ENCODE measurements at regions of chr2 and their contacts with region 1.

Region 1: DNA sequence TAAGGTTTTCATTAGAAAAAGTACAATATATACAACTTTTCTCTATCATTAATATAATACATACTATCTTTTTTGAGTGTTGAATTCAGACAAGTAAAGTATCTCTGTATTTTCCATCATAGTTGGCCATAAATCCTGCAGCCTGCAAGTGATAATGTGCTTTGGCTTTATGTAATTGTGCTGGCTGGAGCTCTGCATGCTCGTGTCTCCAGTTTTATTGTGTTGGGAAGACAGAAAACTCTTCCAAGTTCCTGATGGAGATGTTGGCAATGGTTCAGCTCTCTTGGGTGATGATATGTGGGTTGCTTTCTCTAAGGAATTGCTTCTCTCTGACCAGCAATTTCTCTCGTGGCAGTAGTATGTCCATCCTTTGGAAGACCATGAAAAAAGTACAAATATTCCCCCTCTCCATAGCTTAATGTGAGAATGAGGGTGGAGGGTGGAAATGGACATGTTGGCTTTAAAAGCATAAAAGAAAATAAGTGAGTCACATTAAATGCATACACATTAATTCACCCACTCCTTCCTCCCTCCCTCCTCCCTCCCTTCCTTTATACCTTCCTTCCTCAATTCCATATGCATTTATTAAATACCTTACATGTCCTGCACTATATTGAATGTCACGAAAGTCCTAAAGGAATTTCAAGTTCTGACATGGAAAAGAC is 344.2 kb downstream of the MTX2 start:
- DNase-seq: no peak
- H3K4me3 ChIP-seq: no peak overlapping the region
- H3K27ac ChIP-seq: no peak overlapping the region
- H3K4me1 ChIP-seq: peaks cover 14% of the 10 kb centered on the region
- H3K27me3 ChIP-seq: no peaks in the 10 kb centered on the region
- CTCF ChIP-seq: no peak

Region 2: DNA sequence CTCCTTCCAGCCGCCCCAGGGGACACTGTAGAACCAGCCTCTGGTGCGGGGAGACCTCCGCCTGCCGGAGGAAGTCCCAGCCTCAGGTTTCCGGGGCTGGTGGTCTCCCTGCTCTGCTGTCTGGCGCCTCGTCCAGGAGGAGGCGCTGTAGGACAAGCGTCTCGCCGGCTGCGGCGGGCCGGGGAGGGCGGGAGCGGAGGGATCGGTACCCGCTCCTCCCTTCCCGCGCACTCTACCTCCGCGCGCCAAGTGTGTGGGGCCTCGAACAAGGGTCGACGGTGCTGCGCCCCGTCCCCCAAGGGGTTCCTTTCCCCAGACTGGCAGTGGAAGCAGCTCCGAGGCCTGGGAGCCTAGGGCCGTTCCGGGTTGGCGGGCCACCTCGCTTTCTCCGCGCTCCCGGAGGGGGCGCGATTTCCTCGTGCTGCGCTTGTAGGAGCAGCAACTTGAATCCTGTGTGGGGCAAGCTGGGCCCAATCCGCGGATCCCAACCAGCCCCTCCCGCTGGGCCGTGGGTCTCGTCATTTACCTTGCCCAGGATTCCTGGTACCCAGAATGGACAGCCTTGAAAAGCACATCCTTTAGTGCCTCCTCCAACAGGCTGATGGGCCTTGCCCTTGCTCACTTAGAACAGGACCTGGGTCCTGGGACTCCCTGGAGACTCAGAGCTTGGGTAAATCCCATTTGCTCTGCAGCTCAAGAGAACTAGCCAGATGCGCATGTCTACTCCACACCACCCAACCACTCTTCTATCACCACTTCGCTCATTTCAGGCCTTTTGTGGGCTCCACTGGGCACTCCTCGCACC is 472.7 kb before region 1 on chr2:
- CTCF ChIA-PET with region 1: no interaction called
- POLR2A ChIA-PET with region 1: interaction called, 13 read pairs
- intact Hi-C with region 1: no loop called
- DNase-seq: peak in 1 of 2 experiments; percentile 60
- H3K4me3 ChIP-seq: no peak overlapping the region
- H3K27ac ChIP-seq: no peak overlapping the region
- H3K4me1 ChIP-seq: no peaks in the 10 kb centered on the region
- H3K27me3 ChIP-seq: peaks cover 29% of the 10 kb centered on the region; the same call in 1 of the 2 replicates
- CTCF ChIP-seq: peak; percentile 44

Region 3: DNA sequence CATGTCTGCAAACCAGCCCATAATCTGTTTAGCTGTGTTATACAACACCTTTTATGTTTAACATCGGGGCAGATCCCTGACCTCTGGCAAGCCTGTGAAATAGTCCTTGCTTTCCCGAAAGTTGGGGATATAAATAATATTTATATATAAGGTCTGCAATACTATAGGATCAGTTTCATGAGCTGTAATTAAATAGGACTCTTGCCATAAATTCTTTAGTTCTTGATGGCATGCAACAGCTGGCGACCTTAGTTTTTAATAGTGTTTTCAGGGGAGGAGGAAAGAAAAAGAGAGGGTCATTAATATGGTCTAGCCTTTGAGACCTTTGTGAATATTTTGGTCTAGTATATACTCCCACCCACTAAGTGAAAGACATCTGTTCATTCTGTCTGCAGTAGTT is 177.7 kb before region 1 on chr2:
- CTCF ChIA-PET with region 1: no interaction called
- POLR2A ChIA-PET with region 1: no interaction called
- intact Hi-C with region 1: no loop called
- DNase-seq: no peak
- H3K4me3 ChIP-seq: no peak overlapping the region
- H3K27ac ChIP-seq: no peak overlapping the region
- H3K4me1 ChIP-seq: no peaks in the 10 kb centered on the region
- H3K27me3 ChIP-seq: no peaks in the 10 kb centered on the region
- CTCF ChIP-seq: no peak

Region 4: DNA sequence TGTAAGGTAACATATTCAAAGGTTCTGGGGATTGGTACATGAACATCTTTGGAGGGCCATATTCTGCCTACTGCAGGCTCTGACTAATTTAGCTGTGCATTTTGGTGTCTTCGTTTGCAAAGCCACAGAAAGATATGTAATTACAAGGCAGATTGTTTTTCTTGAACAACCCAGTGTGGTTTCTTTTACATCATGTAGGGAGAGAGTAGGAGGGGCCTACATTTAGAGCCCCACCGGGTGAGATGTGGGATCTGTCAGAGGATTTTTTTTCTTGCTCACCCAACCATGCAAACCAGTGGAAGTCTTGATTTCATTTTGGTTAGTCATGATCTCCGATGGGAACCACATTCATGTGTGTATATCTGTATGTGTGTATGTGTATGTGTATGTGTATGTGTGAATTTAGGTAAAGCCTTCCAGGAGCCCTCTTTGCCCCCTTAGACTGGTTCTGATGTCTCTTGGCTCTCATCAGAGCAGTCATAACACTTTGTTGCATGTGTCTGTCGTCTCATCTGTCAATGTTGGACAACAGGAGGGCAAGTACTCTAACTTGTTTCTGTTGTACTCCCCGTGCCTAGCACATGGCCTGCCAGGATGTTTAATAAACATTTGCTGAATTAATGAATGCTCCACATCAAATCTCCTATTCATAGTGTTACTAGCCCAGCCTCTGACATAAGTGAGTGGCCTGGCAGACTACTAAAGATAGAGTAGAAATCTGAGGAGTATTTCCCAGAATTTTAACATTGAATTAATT is 104.3 kb before region 1 on chr2:
- CTCF ChIA-PET with region 1: no interaction called
- POLR2A ChIA-PET with region 1: no interaction called
- intact Hi-C with region 1: loop called (anchors 5 kb)
- DNase-seq: no peak
- H3K4me3 ChIP-seq: no peak overlapping the region
- H3K27ac ChIP-seq: no peak overlapping the region
- H3K4me1 ChIP-seq: no peaks in the 10 kb centered on the region
- H3K27me3 ChIP-seq: no peaks in the 10 kb centered on the region
- CTCF ChIP-seq: no peak

Region 5: DNA sequence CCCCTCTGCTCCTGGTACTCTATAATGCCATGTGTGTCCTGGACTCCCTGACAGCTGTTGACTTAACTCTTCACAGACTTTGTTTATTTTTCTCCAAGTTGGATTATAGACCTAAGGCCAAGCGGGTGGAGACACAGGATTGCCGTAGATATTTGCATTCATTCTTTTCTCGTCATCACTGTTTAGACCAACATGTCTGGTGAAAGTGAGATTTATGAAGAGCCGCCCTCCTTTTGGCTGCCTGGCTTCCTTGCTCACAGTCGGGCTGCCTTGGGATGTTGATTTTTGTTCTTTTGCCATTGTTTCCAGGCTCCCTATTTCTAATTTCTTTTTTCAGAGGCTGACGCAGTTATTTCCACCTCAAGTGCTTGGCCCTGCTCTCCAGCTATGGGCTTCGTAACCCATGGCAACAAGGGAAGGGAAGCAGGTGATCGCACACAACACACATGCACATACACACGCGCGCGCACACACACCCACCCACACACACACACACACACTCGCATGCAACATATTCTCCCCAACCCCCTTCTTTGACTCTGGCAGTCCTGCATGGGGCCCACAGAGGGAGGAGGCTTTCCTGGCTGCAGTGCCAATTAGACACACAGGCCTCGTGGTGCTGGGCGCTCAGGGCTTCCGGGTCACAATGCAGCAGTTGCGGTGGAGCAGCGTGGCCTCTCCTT is 47.7 kb before region 1 on chr2:
- CTCF ChIA-PET with region 1: no interaction called
- POLR2A ChIA-PET with region 1: no interaction called
- intact Hi-C with region 1: loop called (anchors 1 kb)
- DNase-seq: no peak
- H3K4me3 ChIP-seq: no peak overlapping the region
- H3K27ac ChIP-seq: no peak overlapping the region
- H3K4me1 ChIP-seq: peaks cover 23% of the 10 kb centered on the region
- H3K27me3 ChIP-seq: no peaks in the 10 kb centered on the region
- CTCF ChIP-seq: no peak

Region 6: GRCh38 chr2:176664478-176664877 is 51.0 kb after region 1 on chr2:
- CTCF ChIA-PET with region 1: no interaction called
- POLR2A ChIA-PET with region 1: no interaction called
- intact Hi-C with region 1: no loop called
- DNase-seq: peak in 1 of 2 experiments; percentile 19
- H3K4me3 ChIP-seq: no peak overlapping the region
- H3K27ac ChIP-seq: no peak overlapping the region
- H3K4me1 ChIP-seq: 0 out of 2 replicates have a peak, but pooled peaks cover 7% of the 10 kb centered on the region
- H3K27me3 ChIP-seq: no peaks in the 10 kb centered on the region
- CTCF ChIP-seq: no peak